Activated CD8-positive, alpha-beta T cell treated with anti-CD3 and anti-CD28 coated beads, Interleukin-2, amount 10 ng/mL, durations not matched to agents 7 days and 5 days (primary cell): ENCODE measurements at regions of chr11 and their contacts with region 1.

Region 1: GRCh38 chr11:15006139-15006759 is 34.1 kb upstream of the CALCA start:
- DNase-seq: no peak
- ATAC-seq: peak; percentile 65
- H3K4me3 Mint-ChIP-seq: no peak overlapping the region
- H3K27ac Mint-ChIP-seq: no peak overlapping the region
- H3K4me1 Mint-ChIP-seq: no peaks in the 10 kb centered on the region
- H3K27me3 Mint-ChIP-seq: peaks cover 35% of the 10 kb centered on the region

Region 2: GRCh38 chr11:14974515-14975251 is 31.6 kb before region 1 on chr11:
- CTCF ChIA-PET with region 1: interaction called, 65 read pairs
- POLR2A ChIA-PET with region 1: no interaction called
- DNase-seq: peak; percentile 76
- ATAC-seq: peak; percentile 71
- H3K4me3 Mint-ChIP-seq: peak overlapping the region; percentile 65
- H3K27ac Mint-ChIP-seq: no peak overlapping the region
- H3K4me1 Mint-ChIP-seq: peaks cover 31% of the 10 kb centered on the region
- H3K27me3 Mint-ChIP-seq: peaks cover 74% of the 10 kb centered on the region

Region 3: DNA sequence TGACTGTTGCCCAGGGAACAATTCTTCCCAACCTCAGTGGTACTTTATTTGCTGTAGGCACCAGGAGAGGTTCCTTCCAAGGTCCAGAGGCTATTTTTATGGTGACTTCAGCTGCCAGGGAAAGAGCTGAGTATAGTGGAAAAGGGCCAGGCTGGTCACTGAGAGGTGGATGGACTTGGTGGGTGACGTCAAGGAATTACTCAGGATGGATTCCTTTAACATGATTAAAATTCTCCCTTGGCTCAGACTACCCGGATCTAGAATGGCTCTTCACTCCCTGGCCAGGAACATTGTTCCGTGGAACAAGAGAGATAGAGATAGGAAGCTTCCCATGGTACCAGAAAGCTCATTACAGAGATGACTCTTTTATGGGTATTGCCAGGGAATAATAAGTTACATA is 25.4 kb before region 1 on chr11:
- CTCF ChIA-PET with region 1: interaction called, 65 read pairs
- POLR2A ChIA-PET with region 1: no interaction called
- DNase-seq: no peak
- ATAC-seq: no peak
- H3K4me3 Mint-ChIP-seq: no peak overlapping the region
- H3K27ac Mint-ChIP-seq: no peak overlapping the region
- H3K4me1 Mint-ChIP-seq: peaks cover under 1% of the 10 kb centered on the region
- H3K27me3 Mint-ChIP-seq: peaks cover 33% of the 10 kb centered on the region